Motor neuron (in vitro differentiated cells): ENCODE measurements at regions of chr12 and their contacts with region 1.

Region 1: DNA sequence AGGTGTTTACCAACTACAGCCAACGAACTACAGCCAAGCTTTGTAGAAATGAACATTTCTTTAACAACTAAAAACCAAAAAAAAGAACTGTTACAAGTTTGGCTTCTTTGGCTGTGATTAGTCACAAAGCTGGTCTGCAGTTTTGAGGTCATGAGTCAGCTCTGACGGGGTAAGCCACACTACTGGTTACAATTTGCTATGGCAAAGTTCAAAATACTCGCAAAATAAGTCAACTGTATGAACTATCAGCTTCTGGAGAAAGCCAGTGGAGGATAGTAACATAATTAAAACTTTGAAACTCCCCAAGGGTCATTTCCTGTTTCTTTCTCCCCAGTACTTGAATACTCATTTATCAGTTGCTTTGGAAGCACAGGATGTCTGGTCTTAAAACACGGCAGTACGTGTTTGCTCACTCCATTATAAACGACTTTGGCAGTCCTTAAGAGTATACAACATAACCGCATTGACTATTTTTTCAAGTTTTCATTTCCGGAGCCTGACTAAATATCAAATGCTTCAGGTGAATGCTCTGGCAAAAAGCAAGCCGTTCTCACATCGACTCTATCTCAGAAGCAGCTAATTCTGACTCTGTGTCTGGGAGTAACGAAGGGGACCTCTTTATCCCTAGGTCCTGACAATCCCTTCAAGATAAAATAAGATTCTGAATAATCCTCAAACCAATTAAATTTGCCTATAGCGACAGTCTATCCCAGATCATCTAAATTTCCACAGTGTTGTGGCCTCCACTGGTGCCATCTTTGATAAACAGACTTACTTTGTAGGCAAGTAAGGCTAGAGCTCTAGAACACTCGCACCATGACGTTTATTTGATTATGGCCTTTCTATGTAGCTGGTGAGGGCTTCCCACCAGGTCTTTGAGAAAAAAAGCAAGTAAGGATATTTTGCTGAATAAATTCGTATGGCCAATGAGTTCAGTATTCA is 10.6 kb downstream of the PHLDA1 start:
- ATAC-seq: peak in 2 of 8 experiments; percentile 36 to 45
- H3K4me3 ChIP-seq: no peak overlapping the region
- H3K27ac ChIP-seq: no peak overlapping the region
- H3K4me1 ChIP-seq: peaks cover 5% of the 10 kb centered on the region in 2 donors

Region 2: GRCh38 chr12:75322464-75322863 is 698.5 kb before region 1 on chr12:
- in situ Hi-C with region 1: no loop called
- ATAC-seq: peak in 1 of 8 experiments; percentile 31
- H3K4me3 ChIP-seq: no peak overlapping the region
- H3K27ac ChIP-seq: no peak overlapping the region
- H3K4me1 ChIP-seq: no peaks in the 10 kb centered on the region

Region 3: DNA sequence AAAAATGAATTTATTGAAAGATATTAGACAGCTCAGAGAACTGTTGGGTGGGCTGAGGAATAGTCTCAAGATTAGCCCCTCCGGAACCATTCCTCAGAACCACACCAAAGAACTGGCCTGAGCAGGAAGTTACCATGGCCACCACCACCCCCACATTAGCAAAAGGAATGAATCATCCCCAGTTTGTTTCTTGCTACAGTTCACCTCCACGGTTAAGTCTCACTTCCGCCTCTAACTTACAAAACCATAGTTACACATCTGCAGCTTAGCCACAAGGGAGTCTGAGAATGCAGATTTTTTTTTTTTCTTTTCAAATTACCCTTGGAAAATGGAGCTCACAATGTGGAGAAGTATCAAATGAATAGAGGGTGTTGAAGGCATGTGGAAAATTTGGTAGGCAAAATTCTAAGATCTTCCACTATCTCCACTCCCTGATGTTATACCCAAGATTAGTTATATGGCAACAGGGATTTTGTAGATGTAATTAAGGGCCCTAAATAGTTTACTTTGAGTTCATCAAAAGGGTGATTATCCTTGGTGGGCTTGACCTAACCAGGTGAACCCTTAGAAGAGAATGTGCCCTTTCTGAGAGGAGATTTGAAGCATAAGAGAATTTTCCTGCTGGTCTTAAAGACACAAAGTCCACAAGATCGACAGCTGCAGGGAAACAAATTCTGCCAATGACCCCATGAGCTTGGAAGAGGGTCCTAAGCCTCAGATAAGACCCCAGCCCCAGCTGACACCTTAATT is 379.8 kb before region 1 on chr12:
- in situ Hi-C with region 1: no loop called
- ATAC-seq: peak in 6 of 8 experiments; percentile 23 to 99 (median 76)
- H3K4me3 ChIP-seq: no peak overlapping the region
- H3K27ac ChIP-seq: no peak overlapping the region
- H3K4me1 ChIP-seq: peaks cover 0 to 9% of the 10 kb centered on the region in 2 donors

Region 4: GRCh38 chr12:75820848-75821578 is 200.0 kb before region 1 on chr12:
- in situ Hi-C with region 1: loop called in 1 of 9 experiments (anchors 10 kb)
- ATAC-seq: peak in 2 of 8 experiments; percentile 28 to 44
- H3K4me3 ChIP-seq: no peak overlapping the region
- H3K27ac ChIP-seq: no peak overlapping the region
- H3K4me1 ChIP-seq: peaks cover 0 to 14% of the 10 kb centered on the region in 2 donors